Activated CD4-positive, alpha-beta T cell treated with anti-CD3 and anti-CD28 coated beads for 36 hours (primary cell): ENCODE measurements at regions of chrX and their contacts with region 1.

Region 1: DNA sequence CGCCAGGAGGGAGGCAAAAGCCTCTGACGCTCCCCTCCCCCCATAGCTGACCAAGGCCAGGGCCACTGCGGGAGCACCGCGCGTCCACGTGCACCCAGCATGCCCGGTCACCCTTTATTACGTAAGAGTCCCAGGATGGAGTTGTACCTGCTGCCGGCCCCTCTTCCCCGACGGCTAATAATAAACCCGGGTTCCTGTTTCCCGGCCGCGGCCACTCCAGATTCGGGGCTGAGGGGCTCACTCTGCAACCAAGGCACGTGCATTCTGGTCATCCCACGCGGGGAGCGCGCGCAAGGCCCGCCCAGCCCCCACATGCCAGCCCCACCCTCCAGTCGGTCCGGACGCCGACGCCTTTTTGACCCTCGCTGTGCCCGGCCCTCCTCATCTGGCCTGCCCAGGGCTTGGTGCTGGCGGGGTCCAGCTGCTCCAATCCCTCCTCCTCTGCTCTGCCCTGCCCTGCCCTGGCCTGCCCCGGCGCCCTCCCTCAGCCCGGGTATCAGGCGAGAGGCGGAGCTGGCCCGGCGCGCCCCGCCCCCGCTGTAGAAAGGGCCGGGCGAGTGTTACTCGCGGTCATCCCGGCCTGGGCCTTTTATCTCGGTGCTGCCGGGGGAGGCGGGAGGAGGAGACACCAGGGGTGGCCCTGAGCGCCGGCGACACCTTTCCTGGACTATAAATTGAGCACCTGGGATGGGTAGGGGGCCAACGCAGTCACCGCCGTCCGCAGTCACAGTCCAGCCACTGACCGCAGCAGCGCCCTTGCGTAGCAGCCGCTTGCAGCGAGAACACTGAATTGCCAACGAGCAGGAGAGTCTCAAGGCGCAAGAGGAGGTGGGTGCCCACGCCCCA is 2.5 kb downstream of the MID1IP1 start:
- DNase-seq: peak; percentile 87
- ATAC-seq: peak; percentile 68
- H3K4me3 Mint-ChIP-seq: peak overlapping the region; percentile 95
- H3K27ac Mint-ChIP-seq: peak overlapping the region; percentile 96
- H3K4me1 Mint-ChIP-seq: peaks cover 15% of the 10 kb centered on the region
- H3K27me3 Mint-ChIP-seq: no peaks in the 10 kb centered on the region

Region 2: GRCh38 chrX:38636949-38637819 is 166.6 kb before region 1 on chrX:
- CTCF ChIA-PET with region 1: no interaction called
- POLR2A ChIA-PET with region 1: no interaction called
- intact Hi-C with region 1: no loop called
- DNase-seq: no peak
- ATAC-seq: no peak
- H3K4me3 Mint-ChIP-seq: no peak overlapping the region
- H3K27ac Mint-ChIP-seq: no peak overlapping the region
- H3K4me1 Mint-ChIP-seq: peaks cover 4% of the 10 kb centered on the region
- H3K27me3 Mint-ChIP-seq: peaks cover 2% of the 10 kb centered on the region

Region 3: GRCh38 chrX:38985375-38985774 is 181.6 kb after region 1 on chrX:
- CTCF ChIA-PET with region 1: no interaction called
- POLR2A ChIA-PET with region 1: no interaction called
- intact Hi-C with region 1: loop called (anchors 1 to 10 kb)
- DNase-seq: peak; percentile 7
- ATAC-seq: peak; percentile 65
- H3K4me3 Mint-ChIP-seq: no peak overlapping the region
- H3K27ac Mint-ChIP-seq: no peak overlapping the region
- H3K4me1 Mint-ChIP-seq: no peaks in the 10 kb centered on the region
- H3K27me3 Mint-ChIP-seq: no peaks in the 10 kb centered on the region

Region 4: DNA sequence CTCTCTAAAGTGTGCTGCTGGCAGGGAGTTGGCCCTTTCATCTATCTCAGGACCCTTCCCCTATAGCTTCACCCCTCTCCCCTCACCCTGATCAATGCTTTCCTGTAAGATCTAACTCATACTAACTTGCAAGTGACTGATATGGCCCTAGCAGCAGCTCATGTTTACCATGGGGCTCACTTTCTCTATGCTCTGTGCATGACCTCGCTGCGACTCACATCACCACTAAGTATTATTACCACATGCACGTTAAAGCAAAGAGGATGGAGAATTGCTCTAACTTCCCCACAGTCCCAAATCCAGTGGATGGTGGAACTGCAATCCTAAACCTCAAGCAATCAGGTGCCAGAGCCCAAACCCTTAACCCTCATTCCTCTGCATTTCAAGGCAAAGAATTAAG is 624.1 kb after region 1 on chrX:
- CTCF ChIA-PET with region 1: no interaction called
- POLR2A ChIA-PET with region 1: no interaction called
- intact Hi-C with region 1: loop called in 1 of 2 experiments (anchors 5 kb)
- DNase-seq: peak; percentile 73
- ATAC-seq: peak; percentile 71
- H3K4me3 Mint-ChIP-seq: no peak overlapping the region
- H3K27ac Mint-ChIP-seq: peak overlapping the region; percentile 82
- H3K4me1 Mint-ChIP-seq: peaks cover 73% of the 10 kb centered on the region
- H3K27me3 Mint-ChIP-seq: no peaks in the 10 kb centered on the region

Region 5: GRCh38 chrX:40097497-40098263 is 1293.9 kb after region 1 on chrX and contains the start of gene BCOR:
- CTCF ChIA-PET with region 1: no interaction called
- POLR2A ChIA-PET with region 1: interaction called, 3 read pairs
- intact Hi-C with region 1: loop called in 1 of 2 experiments (anchors 5 kb)
- DNase-seq: peak; percentile 88
- ATAC-seq: peak; percentile 40
- H3K4me3 Mint-ChIP-seq: peak within 1 kb of the TSS; percentile 86
- H3K27ac Mint-ChIP-seq: peak within 1 kb of the TSS; percentile 77
- H3K4me1 Mint-ChIP-seq: peaks cover 22% of the 10 kb centered on the region
- H3K27me3 Mint-ChIP-seq: no peaks in the 10 kb centered on the region
- total RNA-seq, gene BCOR: 34.7 to 51.1 TPM

Region 6: GRCh38 chrX:40175511-40176350 is 1371.9 kb after region 1 on chrX:
- CTCF ChIA-PET with region 1: no interaction called
- POLR2A ChIA-PET with region 1: interaction called, 3 read pairs
- intact Hi-C with region 1: loop called (anchors 1 to 5 kb)
- DNase-seq: peak; percentile 84
- ATAC-seq: peak; percentile 37
- H3K4me3 Mint-ChIP-seq: peak overlapping the region; percentile 80
- H3K27ac Mint-ChIP-seq: peak overlapping the region; percentile 99
- H3K4me1 Mint-ChIP-seq: peaks cover 25% of the 10 kb centered on the region
- H3K27me3 Mint-ChIP-seq: no peaks in the 10 kb centered on the region